A673 (cell line): ENCODE measurements at regions of chr20 and their contacts with region 1.

Region 1: GRCh38 chr20:21235484-21236445 is 67.4 kb upstream of the XRN2 start:
- DNase-seq: peak; percentile 80
- H3K4me3 ChIP-seq: peak overlapping the region; percentile 22
- H3K27ac ChIP-seq: no peak overlapping the region
- H3K4me1 ChIP-seq: peaks cover 14% of the 10 kb centered on the region
- H3K27me3 ChIP-seq: no peaks in the 10 kb centered on the region
- CTCF ChIP-seq: peak; percentile 96

Region 2: DNA sequence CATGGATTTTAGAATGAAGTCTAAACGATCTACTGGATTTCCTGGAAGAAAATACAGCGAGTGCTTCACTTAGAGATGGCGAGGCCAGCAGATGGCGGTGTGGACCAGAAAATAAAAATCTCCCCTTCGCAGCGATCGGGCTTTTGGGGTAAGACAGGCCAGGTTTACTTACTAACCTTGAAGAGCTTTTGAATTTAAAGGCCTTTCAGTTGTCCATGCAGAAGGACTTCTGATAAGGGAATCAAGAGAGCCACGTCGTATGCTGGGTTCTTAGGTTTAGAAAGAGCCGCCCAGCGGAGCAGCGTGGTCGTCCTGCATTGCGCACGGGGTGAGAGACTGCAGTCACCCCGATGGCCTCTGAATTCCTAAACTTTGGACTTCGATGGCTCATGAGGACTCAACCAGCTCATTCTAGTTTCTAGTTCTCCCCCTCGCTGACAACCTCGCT is 398.2 kb before region 1 on chr20:
- CTCF ChIA-PET with region 1: no interaction called
- POLR2A ChIA-PET with region 1: interaction called, 3 read pairs
- intact Hi-C with region 1: loop called (anchors 5 kb)
- DNase-seq: peak; percentile 82
- H3K4me3 ChIP-seq: no peak overlapping the region
- H3K27ac ChIP-seq: no peak overlapping the region
- H3K4me1 ChIP-seq: no peaks in the 10 kb centered on the region
- H3K27me3 ChIP-seq: no peaks in the 10 kb centered on the region
- CTCF ChIP-seq: peak; percentile 88

Region 3: GRCh38 chr20:21395666-21396598 is 160.2 kb after region 1 on chr20:
- CTCF ChIA-PET with region 1: no interaction called
- POLR2A ChIA-PET with region 1: no interaction called
- intact Hi-C with region 1: loop called (anchors 10 kb)
- DNase-seq: no peak
- H3K4me3 ChIP-seq: peak overlapping the region; percentile 37
- H3K27ac ChIP-seq: no peak overlapping the region
- H3K4me1 ChIP-seq: no peaks in the 10 kb centered on the region
- H3K27me3 ChIP-seq: peaks cover 73% of the 10 kb centered on the region
- CTCF ChIP-seq: no peak

Region 4: GRCh38 chr20:21571841-21572690 is 336.3 kb after region 1 on chr20:
- CTCF ChIA-PET with region 1: no interaction called
- POLR2A ChIA-PET with region 1: no interaction called
- intact Hi-C with region 1: loop called (anchors 1 kb)
- DNase-seq: peak; percentile 61
- H3K4me3 ChIP-seq: no peak overlapping the region
- H3K27ac ChIP-seq: peak overlapping the region; percentile 71
- H3K4me1 ChIP-seq: peaks cover 53% of the 10 kb centered on the region
- H3K27me3 ChIP-seq: no peaks in the 10 kb centered on the region
- CTCF ChIP-seq: peak; percentile 92

Region 5: DNA sequence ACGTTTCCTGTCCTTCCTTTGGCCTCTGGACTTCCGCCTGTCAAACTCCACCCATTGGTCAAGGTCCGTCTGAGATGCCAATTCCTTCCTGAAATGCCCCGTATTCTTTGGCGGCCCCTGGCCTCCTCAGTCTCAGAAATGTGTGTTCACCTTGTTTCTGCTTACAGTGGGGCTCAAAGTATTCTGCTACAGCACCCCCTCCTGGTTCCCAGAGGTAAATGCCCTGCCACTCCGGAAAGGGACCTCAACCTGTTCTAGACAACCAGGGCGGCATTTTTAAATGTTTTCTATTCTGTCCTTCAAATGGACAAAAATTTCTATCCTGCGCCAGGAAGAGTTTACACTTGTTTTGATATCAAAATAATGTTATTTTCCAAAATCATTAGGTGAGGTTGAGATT is 457.6 kb after region 1 on chr20:
- CTCF ChIA-PET with region 1: no interaction called
- POLR2A ChIA-PET with region 1: no interaction called
- intact Hi-C with region 1: loop called (anchors 10 kb)
- DNase-seq: peak; percentile 48
- H3K4me3 ChIP-seq: no peak overlapping the region
- H3K27ac ChIP-seq: no peak overlapping the region
- H3K4me1 ChIP-seq: peaks cover 6% of the 10 kb centered on the region
- H3K27me3 ChIP-seq: peaks cover 14% of the 10 kb centered on the region
- CTCF ChIP-seq: peak; percentile 79